Naive thymus-derived CD4-positive, alpha-beta T cell (primary cell): ENCODE measurements at regions of chr1 and their contacts with region 1.

Region 1: GRCh38 chr1:59699227-59699847 is 115.4 kb upstream of the HOOK1 start:
- DNase-seq: peak in 7 of 9 donors; percentile 21 to 63 (median 51)
- ATAC-seq: peak; percentile 75
- H3K4me3 ChIP-seq: no peak overlapping the region
- H3K4me3 Mint-ChIP-seq: peak overlapping the region in 1 of 10 donors; percentile 19
- H3K27ac ChIP-seq: no peak overlapping the region
- H3K27ac Mint-ChIP-seq: peak overlapping the region in 2 of 9 donors; percentile 1 to 31
- H3K4me1 ChIP-seq: peaks cover 5 to 6% of the 10 kb centered on the region in 2 donors
- H3K4me1 Mint-ChIP-seq: peaks cover 6 to 30% (median 22%) of the 10 kb centered on the region in 7 donors
- H3K27me3 ChIP-seq: no peaks in the 10 kb centered on the region
- H3K27me3 Mint-ChIP-seq: no peaks in the 10 kb centered on the region

Region 2: GRCh38 chr1:58652651-58653184 is 1046.6 kb before region 1 on chr1:
- CTCF ChIA-PET with region 1: interaction called, 4 read pairs
- POLR2A ChIA-PET with region 1: no interaction called
- intact Hi-C with region 1: loop called (anchors 1 to 2 kb)
- DNase-seq: peak; percentile 11 to 66 (median 55)
- ATAC-seq: peak; percentile 96
- H3K4me3 ChIP-seq: no peak overlapping the region
- H3K4me3 Mint-ChIP-seq: no peak overlapping the region
- H3K27ac ChIP-seq: no peak overlapping the region
- H3K27ac Mint-ChIP-seq: peak overlapping the region in 3 of 9 donors; percentile 7 to 49 (median 25)
- H3K4me1 ChIP-seq: peaks cover 0 to 8% of the 10 kb centered on the region in 2 donors
- H3K4me1 Mint-ChIP-seq: peaks cover 17 to 36% (median 25%) of the 10 kb centered on the region in 7 donors
- H3K27me3 ChIP-seq: no peaks in the 10 kb centered on the region
- H3K27me3 Mint-ChIP-seq: no peaks in the 10 kb centered on the region

Region 3: DNA sequence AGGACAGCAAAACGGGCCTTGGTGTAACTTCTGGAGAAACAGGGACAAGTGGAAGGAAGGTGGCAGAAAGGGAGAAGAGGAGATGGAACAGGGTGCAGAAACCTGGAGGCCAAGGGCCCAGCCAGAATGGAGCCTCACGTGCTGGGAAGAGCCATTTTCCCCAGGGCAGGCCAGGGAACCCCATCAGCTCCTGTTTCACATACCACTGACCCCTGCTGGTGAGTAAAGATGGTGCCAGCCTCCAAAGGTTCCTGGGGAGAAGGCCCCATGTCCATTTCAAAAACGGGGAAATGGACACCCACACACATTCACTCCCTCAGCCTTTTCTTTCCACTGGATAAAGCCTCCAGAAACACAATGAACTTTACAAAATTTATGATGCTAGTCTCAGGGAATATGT is 857.9 kb before region 1 on chr1:
- CTCF ChIA-PET with region 1: no interaction called
- POLR2A ChIA-PET with region 1: no interaction called
- intact Hi-C with region 1: loop called in 1 of 2 experiments (anchors 2 kb)
- DNase-seq: peak in 1 of 9 donors; percentile 5
- ATAC-seq: peak; percentile 44
- H3K4me3 ChIP-seq: no peak overlapping the region
- H3K4me3 Mint-ChIP-seq: no peak overlapping the region
- H3K27ac ChIP-seq: no peak overlapping the region
- H3K27ac Mint-ChIP-seq: no peak overlapping the region
- H3K4me1 ChIP-seq: no peaks in the 10 kb centered on the region
- H3K4me1 Mint-ChIP-seq: peaks cover 0 to 11% (median 1%) of the 10 kb centered on the region in 7 donors
- H3K27me3 ChIP-seq: no peaks in the 10 kb centered on the region
- H3K27me3 Mint-ChIP-seq: no peaks in the 10 kb centered on the region

Region 4: DNA sequence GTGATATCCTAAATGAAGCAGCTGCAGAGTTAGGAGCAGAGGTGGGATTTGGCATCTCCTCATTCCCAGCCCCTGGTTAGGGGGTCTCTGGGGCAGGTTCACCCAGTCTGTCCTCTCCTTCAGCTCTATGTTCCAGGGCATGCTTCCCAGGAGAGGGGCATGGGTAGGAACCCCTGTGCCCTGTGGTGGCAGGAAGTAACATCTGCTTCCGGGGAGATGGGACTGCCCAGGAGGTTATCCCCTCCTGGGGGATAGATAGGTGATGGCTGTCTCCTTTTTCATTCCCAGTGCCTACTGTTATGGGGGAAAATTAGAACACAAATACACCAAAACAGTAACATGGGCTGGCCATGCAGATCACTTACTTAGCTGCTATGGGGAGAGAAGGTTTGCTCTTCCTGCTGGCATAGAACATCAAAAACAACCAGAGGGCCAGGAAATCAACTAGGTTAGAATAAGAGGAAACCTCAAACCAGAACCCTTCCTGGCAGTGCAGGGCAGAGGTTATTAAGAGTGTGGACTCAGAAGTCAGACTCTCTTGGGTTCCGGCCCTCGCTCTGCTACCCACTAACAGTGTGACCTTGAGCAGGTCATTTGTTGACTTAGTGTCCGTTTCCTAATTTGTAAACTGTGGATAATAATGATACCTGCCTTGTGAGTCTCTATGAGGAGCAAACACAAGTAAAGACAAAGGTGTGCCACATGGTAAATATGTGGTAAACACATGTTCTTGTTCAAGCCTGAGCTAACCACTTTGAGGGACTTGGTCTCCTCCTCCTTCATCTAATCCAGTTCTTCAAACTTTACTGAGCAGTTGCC is 757.7 kb before region 1 on chr1:
- CTCF ChIA-PET with region 1: no interaction called
- POLR2A ChIA-PET with region 1: no interaction called
- intact Hi-C with region 1: loop called in 1 of 2 experiments (anchors 10 kb)
- DNase-seq: peak in 6 of 9 donors; percentile 33 to 65 (median 57)
- ATAC-seq: peak; percentile 83
- H3K4me3 ChIP-seq: peak overlapping the region; percentile 40
- H3K4me3 Mint-ChIP-seq: peak overlapping the region; percentile 60 to 88 (median 80)
- H3K27ac ChIP-seq: peak overlapping the region; percentile 39
- H3K27ac Mint-ChIP-seq: peak overlapping the region; percentile 37 to 89 (median 77)
- H3K4me1 ChIP-seq: peaks cover 48 to 61% of the 10 kb centered on the region in 2 donors
- H3K4me1 Mint-ChIP-seq: peaks cover 60 to 87% (median 74%) of the 10 kb centered on the region in 7 donors
- H3K27me3 ChIP-seq: no peaks in the 10 kb centered on the region
- H3K27me3 Mint-ChIP-seq: no peaks in the 10 kb centered on the region

Region 5: DNA sequence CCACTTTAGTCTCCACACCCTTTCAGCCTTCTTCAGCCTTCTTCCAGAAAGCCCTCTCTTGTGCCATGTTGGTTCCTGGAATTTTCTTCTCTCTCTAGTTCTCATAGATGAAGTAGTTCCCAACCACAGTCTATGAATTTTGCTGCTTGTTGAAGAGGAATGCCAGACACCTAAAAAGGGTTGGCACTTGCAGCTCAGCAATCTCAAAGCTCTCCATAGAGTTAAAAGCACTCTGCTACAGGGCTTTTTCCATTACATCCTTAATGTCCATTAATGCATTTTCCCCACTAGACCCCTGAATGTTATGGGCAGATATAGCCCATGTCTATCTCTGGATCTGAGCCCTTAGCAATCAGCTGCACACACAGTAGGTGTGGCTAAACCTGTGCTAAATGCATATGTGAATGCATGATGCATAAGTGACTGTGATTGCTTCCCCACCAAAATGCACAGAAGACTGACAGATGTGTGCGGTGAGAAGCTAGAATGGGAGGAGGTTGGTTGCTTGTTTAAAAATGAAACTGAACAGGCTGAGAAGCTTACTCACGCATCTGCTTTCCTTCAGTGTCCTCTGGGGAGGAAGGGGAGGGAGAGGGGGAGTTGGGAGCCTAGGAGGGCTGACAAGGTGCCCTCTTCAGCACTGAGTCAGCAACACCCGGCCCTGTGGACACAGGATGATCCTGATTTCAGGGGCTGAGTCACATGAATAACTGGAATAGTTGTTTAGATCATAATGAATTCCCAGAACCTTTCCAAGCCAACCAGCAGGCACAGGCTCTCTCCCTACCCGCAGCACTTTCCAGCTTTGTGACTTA is 548.6 kb before region 1 on chr1:
- CTCF ChIA-PET with region 1: no interaction called
- POLR2A ChIA-PET with region 1: no interaction called
- intact Hi-C with region 1: loop called (anchors 5 to 10 kb)
- DNase-seq: peak in 1 of 9 donors; percentile 32
- ATAC-seq: no peak
- H3K4me3 ChIP-seq: no peak overlapping the region
- H3K4me3 Mint-ChIP-seq: peak overlapping the region in 2 of 10 donors; percentile 5 to 66
- H3K27ac ChIP-seq: no peak overlapping the region
- H3K27ac Mint-ChIP-seq: peak overlapping the region in 1 of 9 donors; percentile 44
- H3K4me1 ChIP-seq: peaks cover 0 to 5% of the 10 kb centered on the region in 2 donors
- H3K4me1 Mint-ChIP-seq: peaks cover 0 to 45% (median 13%) of the 10 kb centered on the region in 7 donors
- H3K27me3 ChIP-seq: no peaks in the 10 kb centered on the region
- H3K27me3 Mint-ChIP-seq: peaks cover 0 to 9% (median 5%) of the 10 kb centered on the region in 5 donors

Region 6: DNA sequence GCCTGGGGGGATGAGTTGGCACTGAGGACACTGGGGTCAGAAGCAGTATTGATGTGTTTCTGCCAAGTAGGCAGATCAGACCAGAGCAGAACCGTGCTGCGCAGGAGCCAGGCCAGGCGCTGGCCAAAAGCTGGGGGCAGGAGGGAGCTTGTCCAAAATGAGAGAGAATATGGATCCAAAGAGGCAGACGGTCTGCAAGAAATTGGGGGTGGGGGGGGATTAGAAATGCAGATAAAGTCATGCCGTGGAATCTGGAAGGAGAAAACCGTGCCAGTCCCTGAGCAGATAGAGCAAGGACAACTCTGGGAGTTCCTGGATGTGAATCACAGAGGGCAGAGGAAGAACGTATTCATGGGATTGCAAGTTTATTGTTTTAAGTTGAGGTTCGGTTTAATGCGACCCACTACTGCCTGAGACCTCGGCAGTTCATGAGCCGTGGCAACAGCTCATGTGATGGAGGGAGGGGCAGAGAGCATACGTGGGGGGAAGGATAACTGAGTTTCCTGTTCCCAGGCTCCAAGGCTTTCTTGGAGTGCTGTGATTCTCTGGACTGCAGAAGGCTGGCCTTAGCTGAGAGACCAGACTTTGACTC is 178.4 kb before region 1 on chr1:
- CTCF ChIA-PET with region 1: no interaction called
- POLR2A ChIA-PET with region 1: no interaction called
- intact Hi-C with region 1: no loop called
- DNase-seq: no peak
- ATAC-seq: no peak
- H3K4me3 ChIP-seq: no peak overlapping the region
- H3K4me3 Mint-ChIP-seq: no peak overlapping the region
- H3K27ac ChIP-seq: no peak overlapping the region
- H3K27ac Mint-ChIP-seq: no peak overlapping the region
- H3K4me1 ChIP-seq: no peaks in the 10 kb centered on the region
- H3K4me1 Mint-ChIP-seq: no peaks in the 10 kb centered on the region
- H3K27me3 ChIP-seq: no peaks in the 10 kb centered on the region
- H3K27me3 Mint-ChIP-seq: no peaks in the 10 kb centered on the region

Region 7: DNA sequence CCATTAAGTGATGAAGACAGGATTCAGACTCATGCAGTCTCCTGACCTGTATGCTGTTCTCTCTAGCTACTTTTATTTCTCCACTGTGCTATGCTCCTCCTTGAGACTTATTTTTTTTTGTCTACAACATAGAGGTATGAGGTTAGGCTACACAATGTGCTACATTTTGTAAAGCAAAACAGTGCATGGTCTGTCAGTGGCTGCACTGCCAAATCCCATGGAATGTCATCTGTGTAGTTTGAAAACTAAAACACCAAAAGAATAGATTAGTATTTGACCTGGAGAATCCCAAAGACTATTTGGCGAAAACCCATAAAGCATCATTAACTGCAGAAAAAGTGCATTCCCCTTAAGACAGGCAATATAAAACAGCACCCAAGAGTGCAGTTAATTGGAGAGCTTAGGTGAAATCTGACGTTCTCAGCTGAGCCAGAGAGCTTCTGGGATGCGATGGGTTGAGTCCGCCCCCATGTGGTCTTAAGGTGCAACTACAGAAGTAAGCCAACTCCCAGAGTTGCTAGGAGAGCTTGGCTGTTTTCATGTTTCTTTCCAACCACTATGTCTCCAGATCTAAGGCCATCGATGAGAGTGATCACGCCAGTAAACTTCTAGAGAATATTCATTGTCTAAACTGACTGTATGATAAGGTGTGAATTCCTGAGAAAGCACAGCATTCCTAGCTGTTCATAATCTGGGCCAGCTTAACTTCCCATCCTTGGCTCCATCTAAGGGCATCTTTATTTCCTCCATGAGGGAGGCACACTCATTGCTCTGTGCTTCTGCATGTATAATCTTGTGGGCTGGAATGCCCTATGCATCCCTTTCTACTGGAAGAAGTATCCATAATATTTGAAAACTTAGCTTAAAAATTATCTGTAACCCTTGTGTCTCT is 248.0 kb after region 1 on chr1:
- CTCF ChIA-PET with region 1: interaction called, 3 read pairs
- POLR2A ChIA-PET with region 1: no interaction called
- intact Hi-C with region 1: loop called (anchors 5 to 10 kb)
- DNase-seq: peak in 8 of 9 donors; percentile 13 to 64 (median 52)
- ATAC-seq: peak; percentile 90
- H3K4me3 ChIP-seq: no peak overlapping the region
- H3K4me3 Mint-ChIP-seq: no peak overlapping the region
- H3K27ac ChIP-seq: no peak overlapping the region
- H3K27ac Mint-ChIP-seq: no peak overlapping the region
- H3K4me1 ChIP-seq: no peaks in the 10 kb centered on the region
- H3K4me1 Mint-ChIP-seq: no peaks in the 10 kb centered on the region
- H3K27me3 ChIP-seq: no peaks in the 10 kb centered on the region
- H3K27me3 Mint-ChIP-seq: peaks cover 2 to 11% (median 6%) of the 10 kb centered on the region in 5 donors